ENCODE measurements at regions of chr13 and their contacts with region 1.

Region 1: DNA sequence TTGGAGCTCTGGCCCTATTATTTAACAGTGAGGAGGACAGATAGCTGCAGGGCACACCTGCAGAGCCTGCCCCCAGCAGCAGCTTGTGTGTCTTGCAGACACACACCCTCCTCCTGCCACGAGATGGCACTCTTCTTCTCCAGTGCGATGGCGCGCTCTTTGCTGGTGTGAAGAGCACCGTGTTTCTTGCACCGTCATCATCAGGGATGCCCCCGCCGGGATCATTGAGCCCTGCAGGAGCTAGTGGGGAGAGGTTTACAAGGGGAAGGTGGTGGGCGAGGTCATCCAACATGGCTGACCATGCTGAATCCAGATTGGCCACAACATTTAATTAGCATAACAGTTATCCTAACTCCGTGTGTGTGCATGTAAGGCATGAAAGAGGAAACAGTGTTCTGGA is 105.6 kb downstream of the RAB20 start:
- DNase-seq: peak; percentile 83
- ATAC-seq: peak; percentile 99
- H3K4me3 Mint-ChIP-seq: no peak overlapping the region
- H3K27ac Mint-ChIP-seq: no peak overlapping the region
- H3K4me1 Mint-ChIP-seq: peaks cover 3% of the 10 kb centered on the region
- H3K27me3 Mint-ChIP-seq: peaks cover 18% of the 10 kb centered on the region

Region 2: DNA sequence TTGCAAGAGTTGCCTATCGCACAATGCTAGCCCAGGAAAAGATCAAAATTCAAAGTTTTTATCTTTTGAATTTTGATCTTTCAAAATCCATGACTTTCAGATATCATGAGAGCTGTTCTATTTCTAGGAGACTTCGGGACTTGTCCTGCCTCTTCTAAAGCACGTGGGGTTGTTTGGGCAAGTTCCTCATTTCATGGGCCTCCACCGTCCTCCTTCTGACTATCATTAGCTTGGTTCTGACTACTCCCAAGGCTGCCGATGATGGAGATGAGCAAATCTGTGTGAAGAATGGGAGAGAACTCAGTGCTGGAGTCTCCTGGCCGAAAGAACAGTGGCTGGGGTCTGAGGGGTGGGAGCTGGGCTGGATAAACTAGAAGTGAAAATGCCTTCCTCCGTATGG is 235.5 kb before region 1 on chr13:
- CTCF ChIA-PET with region 1: interaction called, 6 read pairs
- POLR2A ChIA-PET with region 1: no interaction called
- intact Hi-C with region 1: loop called in 1 of 2 experiments (anchors 5 kb)
- DNase-seq: no peak
- ATAC-seq: no peak
- H3K4me3 Mint-ChIP-seq: no peak overlapping the region
- H3K27ac Mint-ChIP-seq: no peak overlapping the region
- H3K4me1 Mint-ChIP-seq: no peaks in the 10 kb centered on the region
- H3K27me3 Mint-ChIP-seq: peaks cover 32% of the 10 kb centered on the region

Region 3: DNA sequence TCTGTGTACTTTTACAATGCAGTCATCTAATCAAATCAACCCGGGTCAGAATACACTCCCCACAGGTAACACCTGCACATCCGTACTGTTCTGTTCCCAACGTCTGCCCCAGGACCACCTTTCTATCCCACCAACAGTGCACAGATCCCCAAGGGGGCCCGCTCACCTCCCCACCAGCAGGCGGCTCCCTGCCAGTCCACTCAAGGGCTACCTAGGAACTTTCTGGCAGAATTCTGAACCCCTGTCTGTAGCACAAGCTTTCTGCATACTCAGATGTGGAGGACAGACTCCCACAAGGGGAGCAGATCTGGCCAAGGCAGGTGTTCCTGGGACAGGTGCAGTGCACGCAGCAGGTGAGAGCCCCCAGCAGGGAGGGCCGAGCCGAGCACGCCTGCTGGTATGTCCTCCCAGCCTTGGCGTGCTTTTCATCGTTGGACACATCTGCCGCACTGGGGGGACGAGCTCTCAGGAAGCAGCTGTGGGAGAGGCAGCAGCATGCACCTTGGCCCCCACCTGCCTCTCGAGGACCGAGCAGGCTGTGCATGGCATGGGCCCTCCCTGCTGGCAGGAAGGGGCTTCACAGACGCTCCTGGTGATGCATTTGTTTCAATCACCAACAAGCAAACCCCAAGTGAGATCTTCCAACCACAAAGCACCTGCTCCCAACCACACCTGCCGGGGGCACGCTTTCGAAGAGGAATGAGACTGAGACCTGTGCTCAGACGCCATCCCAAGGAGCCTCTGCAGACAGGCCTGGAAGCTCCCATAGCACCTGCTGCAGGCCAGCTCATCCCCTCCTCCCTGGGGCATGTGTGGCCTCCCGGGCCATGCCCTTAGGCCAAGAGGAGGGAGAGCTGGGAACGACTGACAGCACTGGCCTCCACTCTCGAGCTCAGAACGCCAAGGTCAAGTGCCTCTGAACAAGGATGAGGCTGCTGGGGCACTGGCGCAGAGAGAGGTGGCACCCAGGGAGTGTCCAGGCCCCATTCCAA is 69.7 kb after region 1 on chr13:
- CTCF ChIA-PET with region 1: interaction called, 3 read pairs
- POLR2A ChIA-PET with region 1: no interaction called
- intact Hi-C with region 1: loop called (anchors 5 kb)
- DNase-seq: peak; percentile 28
- ATAC-seq: peak; percentile 47
- H3K4me3 Mint-ChIP-seq: no peak overlapping the region
- H3K27ac Mint-ChIP-seq: no peak overlapping the region
- H3K4me1 Mint-ChIP-seq: peaks cover 24% of the 10 kb centered on the region
- H3K27me3 Mint-ChIP-seq: no peaks in the 10 kb centered on the region

Region 4: DNA sequence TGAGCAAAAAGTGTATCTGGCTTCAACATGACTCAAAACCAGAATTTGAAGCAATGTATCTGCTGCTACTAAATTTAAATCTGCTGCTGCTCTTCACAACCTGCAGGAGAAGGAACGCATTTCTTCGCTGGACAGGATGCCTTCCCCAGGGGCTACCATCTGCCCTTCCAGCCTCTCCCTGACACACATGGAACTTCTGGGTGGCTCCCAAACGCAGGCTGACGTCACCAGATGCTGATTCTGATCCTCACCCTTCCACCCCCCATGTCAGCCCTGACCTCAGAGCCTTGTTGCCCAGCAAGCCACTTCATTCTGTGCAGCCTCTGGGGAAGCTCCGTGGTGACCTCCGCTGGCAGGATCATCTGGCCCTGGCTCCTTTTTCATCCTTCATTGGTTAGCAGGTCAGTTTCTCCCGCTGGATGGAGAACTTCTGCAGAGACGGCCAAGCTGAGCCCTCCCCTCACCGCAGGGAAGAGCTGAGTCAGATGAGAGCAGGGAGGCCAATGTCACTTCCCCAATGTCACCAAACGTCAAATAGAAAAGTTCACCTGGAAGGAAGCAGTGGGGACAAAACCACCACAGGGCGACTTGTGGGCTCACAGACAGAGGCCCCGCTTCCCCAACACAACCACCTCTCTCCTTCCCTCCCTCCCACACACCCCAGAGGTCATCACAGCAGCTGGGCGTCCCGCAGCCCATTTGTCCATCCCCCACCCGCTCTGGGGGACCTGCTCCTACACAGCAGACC is 119.6 kb after region 1 on chr13:
- CTCF ChIA-PET with region 1: interaction called, 3 read pairs
- POLR2A ChIA-PET with region 1: no interaction called
- intact Hi-C with region 1: loop called in 1 of 2 experiments (anchors 2 kb)
- DNase-seq: peak; percentile 44
- ATAC-seq: peak; percentile 75
- H3K4me3 Mint-ChIP-seq: no peak overlapping the region
- H3K27ac Mint-ChIP-seq: no peak overlapping the region
- H3K4me1 Mint-ChIP-seq: peaks cover 12% of the 10 kb centered on the region
- H3K27me3 Mint-ChIP-seq: peaks cover 38% of the 10 kb centered on the region

Region 5: DNA sequence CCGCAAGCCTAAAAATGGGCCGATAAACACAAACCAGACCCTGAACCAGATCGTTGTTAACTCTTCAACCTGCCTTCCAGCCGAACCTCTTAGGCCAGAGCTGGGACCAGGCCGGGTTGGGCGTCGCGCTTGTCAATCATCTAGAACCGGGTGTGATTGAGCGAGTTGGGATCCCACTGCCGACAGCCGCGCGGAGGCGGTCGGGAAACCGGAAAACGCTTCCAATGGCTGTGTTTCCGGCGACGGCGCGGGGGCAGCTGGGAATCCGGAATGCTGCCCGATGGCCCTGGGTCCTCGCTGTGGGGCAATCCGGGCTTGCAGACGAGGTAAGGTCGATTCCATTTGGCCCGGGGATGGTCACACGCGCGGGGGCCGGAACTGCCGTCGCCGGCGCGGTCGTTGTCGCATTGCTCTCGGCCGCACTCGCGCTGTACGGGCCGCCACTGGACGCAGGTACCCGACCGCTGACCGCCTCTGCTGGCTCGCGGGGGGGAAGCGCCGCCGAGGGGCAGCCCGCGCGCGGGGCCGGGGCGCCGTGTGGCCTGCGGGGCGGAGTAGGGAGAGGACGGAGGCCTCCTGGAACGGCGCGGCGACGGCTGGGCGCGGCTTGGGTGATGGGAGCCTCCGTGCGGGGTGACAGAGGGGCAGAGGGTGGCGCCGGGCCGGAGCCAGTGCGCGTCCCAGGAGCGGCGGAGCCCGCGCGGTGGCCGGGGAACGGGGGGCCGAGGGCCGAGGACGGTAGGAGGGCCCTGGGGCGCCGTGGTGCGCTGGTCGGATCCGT is 159.6 kb after region 1 on chr13 and contains the start of gene NAXD:
- CTCF ChIA-PET with region 1: no interaction called
- POLR2A ChIA-PET with region 1: no interaction called
- intact Hi-C with region 1: loop called in 1 of 2 experiments (anchors 10 kb)
- DNase-seq: peak; percentile 92
- ATAC-seq: peak; percentile 94
- H3K4me3 Mint-ChIP-seq: peak within 1 kb of the TSS; percentile 88
- H3K27ac Mint-ChIP-seq: peak within 1 kb of the TSS; percentile 96
- H3K4me1 Mint-ChIP-seq: peaks cover 41% of the 10 kb centered on the region
- H3K27me3 Mint-ChIP-seq: no peaks in the 10 kb centered on the region
- total RNA-seq, gene NAXD: 19.6 to 23.3 TPM

Measured in activated CD4-positive, alpha-beta T cell treated with anti-CD3 and anti-CD28 coated beads for 36 hours (primary cell).